B cell (primary cell): ENCODE measurements at regions of chr3 and their contacts with region 1.

Region 1: DNA sequence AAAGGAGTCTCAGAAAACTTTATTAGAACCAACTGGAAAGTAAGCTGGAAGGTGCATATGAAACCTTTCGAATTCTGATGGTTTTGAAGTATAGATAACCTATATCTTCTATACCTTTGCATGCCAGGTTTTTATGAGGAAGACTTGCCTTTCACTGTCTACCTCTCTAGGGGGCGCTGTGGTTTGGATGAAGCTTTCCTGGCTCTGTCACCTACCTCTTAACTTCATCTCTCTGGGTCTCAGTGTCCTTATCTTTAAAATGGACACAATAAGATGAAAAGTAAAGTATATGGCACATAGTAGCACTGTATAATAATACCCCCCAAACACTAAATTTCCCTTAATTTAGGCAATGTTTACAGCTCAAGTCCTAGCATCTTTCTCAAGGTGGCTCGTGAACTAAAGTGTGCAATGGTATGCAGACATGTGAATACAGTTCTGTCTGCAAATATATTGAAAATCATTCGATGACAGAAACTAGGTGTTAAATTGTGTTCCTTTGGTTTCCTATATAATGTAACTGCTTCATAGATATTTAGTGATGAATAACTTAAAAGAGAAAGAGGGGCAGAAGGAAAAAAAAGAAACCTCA is 314.3 kb downstream of the CHST2 start:
- DNase-seq: peak; percentile 34
- ATAC-seq: no peak
- H3K4me3 ChIP-seq: no peak overlapping the region
- H3K4me3 Mint-ChIP-seq: no peak overlapping the region
- H3K27ac ChIP-seq: no peak overlapping the region
- H3K27ac Mint-ChIP-seq: no peak overlapping the region
- H3K4me1 ChIP-seq: peaks cover 17% of the 10 kb centered on the region in 2 donors
- H3K4me1 Mint-ChIP-seq: peaks cover 25% of the 10 kb centered on the region
- H3K27me3 ChIP-seq: no peaks in the 10 kb centered on the region
- H3K27me3 Mint-ChIP-seq: no peaks in the 10 kb centered on the region
- CTCF ChIP-seq: peak; percentile 58

Region 2: DNA sequence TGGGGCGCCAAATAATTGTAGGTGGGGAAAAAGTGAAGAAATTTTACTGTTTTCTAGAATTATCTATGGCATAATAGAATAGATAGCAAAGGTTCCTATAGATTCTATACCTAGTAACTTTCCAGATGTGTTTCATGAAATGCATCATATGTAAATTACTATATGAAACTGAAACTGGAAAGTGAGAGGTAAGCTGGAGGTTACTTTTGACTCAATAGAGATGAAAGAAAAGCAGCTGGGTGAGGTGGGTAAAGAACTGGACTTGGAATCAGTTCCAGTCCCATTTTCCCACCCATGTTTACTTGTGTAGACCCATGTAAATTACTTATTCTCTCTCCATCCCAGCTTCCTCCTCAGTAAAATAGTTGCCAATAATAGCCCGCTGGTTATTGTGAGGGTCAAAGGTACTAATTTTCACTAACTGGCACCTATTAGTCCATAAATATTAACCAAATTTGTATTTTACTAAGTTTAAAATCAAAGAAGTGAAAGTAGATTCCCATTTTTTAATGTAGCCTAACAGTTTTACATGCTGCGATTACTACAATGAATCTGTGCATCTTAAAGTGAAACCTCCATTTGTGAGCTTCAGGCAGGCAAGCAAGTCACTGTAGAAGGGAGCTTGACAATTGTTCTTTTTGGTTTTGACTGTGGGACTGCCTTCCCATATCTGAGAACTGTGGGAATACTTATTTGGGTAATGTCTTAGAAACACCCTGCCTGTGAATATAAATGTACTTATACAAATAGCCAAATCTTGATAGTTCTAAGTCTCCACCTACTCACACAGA is 102.3 kb after region 1 on chr3:
- CTCF ChIA-PET with region 1: interaction called, 4 read pairs
- POLR2A ChIA-PET with region 1: no interaction called
- intact Hi-C with region 1: loop called (anchors 10 kb)
- DNase-seq: peak; percentile 54
- ATAC-seq: peak; percentile 56
- H3K4me3 ChIP-seq: peak overlapping the region in 3 of 5 experiments; percentile 34 to 44 (median 43)
- H3K4me3 Mint-ChIP-seq: peak overlapping the region; percentile 81
- H3K27ac ChIP-seq: peak overlapping the region; percentile 71 to 75
- H3K27ac Mint-ChIP-seq: peak overlapping the region; percentile 75
- H3K4me1 ChIP-seq: peaks cover 19 to 26% of the 10 kb centered on the region in 2 donors
- H3K4me1 Mint-ChIP-seq: peaks cover 59% of the 10 kb centered on the region
- H3K27me3 ChIP-seq: no peaks in the 10 kb centered on the region
- H3K27me3 Mint-ChIP-seq: no peaks in the 10 kb centered on the region
- CTCF ChIP-seq: no peak

Region 3: GRCh38 chr3:143644370-143645089 is 210.6 kb after region 1 on chr3:
- CTCF ChIA-PET with region 1: interaction called, 10 read pairs
- POLR2A ChIA-PET with region 1: no interaction called
- intact Hi-C with region 1: loop called (anchors 5 kb)
- DNase-seq: peak; percentile 67
- ATAC-seq: peak; percentile 51
- H3K4me3 ChIP-seq: no peak overlapping the region
- H3K4me3 Mint-ChIP-seq: no peak overlapping the region
- H3K27ac ChIP-seq: no peak overlapping the region
- H3K27ac Mint-ChIP-seq: peak overlapping the region; percentile 17
- H3K4me1 ChIP-seq: peaks cover 9 to 10% of the 10 kb centered on the region in 2 donors
- H3K4me1 Mint-ChIP-seq: peaks cover 13% of the 10 kb centered on the region
- H3K27me3 ChIP-seq: no peaks in the 10 kb centered on the region
- H3K27me3 Mint-ChIP-seq: no peaks in the 10 kb centered on the region
- CTCF ChIP-seq: peak; percentile 70